ENCODE measurements at regions of chr4 and their contacts with region 1.

Region 1: GRCh38 chr4:110970642-110971041 is 347.8 kb upstream of the PITX2 start:
- DNase-seq: peak; percentile 2
- CTCF ChIP-seq: peak; percentile 60

Region 2: GRCh38 chr4:110631584-110632505 is 338.8 kb before region 1 on chr4:
- in situ Hi-C with region 1: loop called (anchors 25 kb)
- DNase-seq: peak; percentile 87
- CTCF ChIP-seq: peak; percentile 81

Measured in GM13977 (cell line).